Ascending aorta (tissue), 2 donors: ENCODE measurements at regions of chr4 and their contacts with region 1.

Region 1: DNA sequence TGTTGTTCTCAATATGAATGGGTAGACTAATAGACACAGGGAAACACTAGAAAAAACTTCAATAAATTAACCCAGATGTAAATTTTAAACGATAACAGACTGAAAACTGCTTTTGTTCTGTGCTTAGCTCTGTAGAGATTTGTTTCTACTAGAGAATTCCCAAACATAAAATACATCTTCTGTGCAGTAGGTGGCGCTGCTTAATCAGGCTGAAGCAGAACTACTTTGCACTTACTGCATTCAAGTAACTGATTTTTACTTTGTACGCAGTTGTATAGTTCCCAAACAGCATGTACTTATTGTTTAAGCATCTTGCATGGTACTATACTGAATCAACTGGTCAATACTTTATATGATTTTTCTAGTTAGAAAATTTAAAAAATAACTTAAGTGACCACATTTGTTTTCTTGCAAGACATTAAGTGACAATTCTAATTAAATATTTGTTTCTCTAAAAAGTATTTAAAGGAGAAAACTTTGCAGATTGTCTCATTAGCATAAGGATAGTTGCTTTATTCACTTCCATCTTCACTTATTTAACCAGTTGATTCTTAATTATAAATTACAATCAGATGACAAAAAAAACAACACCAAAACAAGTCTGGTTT is 490.6 kb downstream of the IL15 start:
- DNase-seq: peak in 1 of 2 donors; percentile 74
- H3K4me3 ChIP-seq: no peak overlapping the region
- H3K27ac ChIP-seq: no peak overlapping the region
- H3K4me1 ChIP-seq: peaks cover 0 to 14% of the 10 kb centered on the region in 2 donors
- H3K27me3 ChIP-seq: no peaks in the 10 kb centered on the region
- CTCF ChIP-seq: peak; percentile 51 to 85 (median 74)

Region 2: DNA sequence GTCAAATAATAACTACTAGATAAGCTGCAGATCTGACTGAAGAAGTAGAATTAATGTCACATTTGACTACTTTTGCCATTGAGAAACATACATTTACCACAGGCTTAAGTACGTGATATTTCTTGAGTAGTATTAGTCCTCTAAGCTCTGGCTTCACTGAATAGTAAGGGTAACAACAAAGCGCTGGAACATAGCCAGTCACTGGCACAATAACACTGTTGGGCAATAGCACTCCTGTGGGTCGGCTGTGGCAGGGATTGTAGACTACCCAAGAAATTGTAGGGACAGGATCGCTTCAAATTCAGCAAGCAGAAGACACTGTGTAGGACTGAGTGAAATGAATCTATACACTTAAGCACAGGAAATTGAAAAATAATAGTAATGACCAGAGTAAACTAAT is 517.8 kb before region 1 on chr4:
- intact Hi-C with region 1: no loop called
- DNase-seq: no peak
- H3K4me3 ChIP-seq: no peak overlapping the region
- H3K27ac ChIP-seq: no peak overlapping the region
- H3K4me1 ChIP-seq: no peaks in the 10 kb centered on the region
- H3K27me3 ChIP-seq: no peaks in the 10 kb centered on the region
- CTCF ChIP-seq: no peak

Region 3: DNA sequence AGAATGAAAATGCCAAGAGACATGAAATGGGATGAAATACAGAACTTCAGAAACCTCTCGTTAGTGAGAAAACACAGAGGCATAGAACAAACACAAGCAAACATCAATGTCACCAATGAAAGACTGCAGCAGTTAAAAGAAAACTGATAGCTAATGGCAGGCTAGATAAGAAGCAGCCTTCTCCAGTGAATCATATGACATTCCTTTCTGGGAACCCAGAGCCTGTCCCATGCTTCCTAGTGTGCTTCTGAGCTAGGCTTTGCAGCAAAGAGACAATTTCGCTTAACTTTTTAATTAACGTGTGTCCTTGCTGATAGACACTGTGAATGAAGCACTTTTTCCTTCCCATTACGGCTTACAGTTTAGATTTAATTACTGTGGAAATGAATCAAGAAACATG is 46.0 kb before region 1 on chr4:
- intact Hi-C with region 1: no loop called
- DNase-seq: no peak
- H3K4me3 ChIP-seq: no peak overlapping the region
- H3K27ac ChIP-seq: no peak overlapping the region
- H3K4me1 ChIP-seq: no peaks in the 10 kb centered on the region
- H3K27me3 ChIP-seq: no peaks in the 10 kb centered on the region
- CTCF ChIP-seq: no peak

Region 4: GRCh38 chr4:142719854-142720541 is 593.0 kb after region 1 on chr4:
- intact Hi-C with region 1: loop called (anchors 5 kb)
- DNase-seq: no peak
- H3K4me3 ChIP-seq: no peak overlapping the region
- H3K27ac ChIP-seq: no peak overlapping the region
- H3K4me1 ChIP-seq: no peaks in the 10 kb centered on the region
- H3K27me3 ChIP-seq: no peaks in the 10 kb centered on the region
- CTCF ChIP-seq: peak; percentile 15 to 50 (median 26)

Region 5: DNA sequence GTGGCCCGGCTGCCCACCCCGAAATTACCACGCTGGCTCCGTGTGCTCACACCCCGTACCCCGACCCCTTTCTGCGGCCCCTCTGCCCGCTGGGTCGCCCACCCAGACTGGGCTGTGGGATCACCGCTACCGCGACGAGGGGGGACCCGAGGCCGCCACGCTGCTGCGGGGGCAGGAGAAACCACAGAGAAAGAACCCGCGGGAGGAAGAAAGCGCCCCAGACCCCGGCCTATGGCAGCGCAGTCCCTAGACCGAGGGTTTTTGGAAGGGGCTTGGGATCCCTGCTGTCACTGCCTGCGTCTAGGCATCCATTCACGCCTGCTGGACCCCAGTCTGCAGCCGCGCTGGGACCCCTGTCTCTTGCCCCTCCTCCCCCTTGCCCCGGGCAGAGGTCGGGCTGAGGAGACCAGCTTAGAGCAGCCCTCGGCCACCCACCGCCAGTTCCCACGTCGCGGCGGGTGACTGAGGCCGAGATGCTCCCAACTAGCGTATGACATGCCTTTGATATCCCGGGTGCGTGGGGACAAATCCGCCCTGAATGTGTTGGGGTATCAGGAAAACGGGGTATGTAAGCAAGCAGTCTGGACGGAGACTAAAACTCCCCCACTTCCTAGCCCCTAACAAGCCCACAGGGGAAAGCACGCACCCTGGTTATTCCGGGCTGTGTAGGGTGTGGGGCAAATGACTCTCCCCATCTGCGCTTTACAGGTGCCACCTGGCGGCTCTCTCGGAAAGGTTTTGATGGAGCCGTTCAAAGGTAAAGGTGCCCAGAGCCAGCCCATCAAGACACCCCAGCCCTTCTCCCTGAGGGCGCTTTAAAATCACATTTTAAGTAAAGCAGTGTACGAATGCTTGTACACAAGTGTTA is 720.0 kb after region 1 on chr4:
- intact Hi-C with region 1: loop called (anchors 2 kb)
- DNase-seq: peak in 1 of 2 donors; percentile 69
- H3K4me3 ChIP-seq: peak overlapping the region; percentile 77 to 78
- H3K27ac ChIP-seq: peak overlapping the region; percentile 79 to 84
- H3K4me1 ChIP-seq: peaks cover 0 to 5% of the 10 kb centered on the region in 2 donors
- H3K27me3 ChIP-seq: no peaks in the 10 kb centered on the region
- CTCF ChIP-seq: peak; percentile 5 to 53 (median 32)

Region 6: GRCh38 chr4:143085224-143085623 is 958.2 kb after region 1 on chr4:
- intact Hi-C with region 1: loop called (anchors 10 kb)
- DNase-seq: no peak
- H3K4me3 ChIP-seq: no peak overlapping the region
- H3K27ac ChIP-seq: no peak overlapping the region
- H3K4me1 ChIP-seq: no peaks in the 10 kb centered on the region
- H3K27me3 ChIP-seq: no peaks in the 10 kb centered on the region
- CTCF ChIP-seq: peak in 2 of 3 experiments; percentile 24 to 35